Activated CD4-positive, alpha-beta T cell treated with anti-CD3 and anti-CD28 coated beads, Interleukin-2, amount 10 ng/mL, durations not matched to agents 24 days and 14 days (primary cell): ENCODE measurements at regions of chr11 and their contacts with region 1.

Region 1: GRCh38 chr11:6419009-6419631 is at the start of gene APBB1:
- DNase-seq: peak; percentile 93
- H3K4me3 Mint-ChIP-seq: no peak within 1 kb of the TSS
- H3K27ac Mint-ChIP-seq: peak within 1 kb of the TSS; percentile 45
- H3K4me1 Mint-ChIP-seq: peaks cover 3% of the 10 kb centered on the region
- H3K27me3 Mint-ChIP-seq: peaks cover 33% of the 10 kb centered on the region
- total RNA-seq, gene APBB1: 24.1 TPM in 2 replicates

Region 2: GRCh38 chr11:6298605-6299004 is 120.5 kb before region 1 on chr11:
- intact Hi-C with region 1: no loop called
- DNase-seq: no peak
- H3K4me3 Mint-ChIP-seq: no peak overlapping the region
- H3K27ac Mint-ChIP-seq: no peak overlapping the region
- H3K4me1 Mint-ChIP-seq: no peaks in the 10 kb centered on the region
- H3K27me3 Mint-ChIP-seq: peaks cover 11% of the 10 kb centered on the region

Region 3: DNA sequence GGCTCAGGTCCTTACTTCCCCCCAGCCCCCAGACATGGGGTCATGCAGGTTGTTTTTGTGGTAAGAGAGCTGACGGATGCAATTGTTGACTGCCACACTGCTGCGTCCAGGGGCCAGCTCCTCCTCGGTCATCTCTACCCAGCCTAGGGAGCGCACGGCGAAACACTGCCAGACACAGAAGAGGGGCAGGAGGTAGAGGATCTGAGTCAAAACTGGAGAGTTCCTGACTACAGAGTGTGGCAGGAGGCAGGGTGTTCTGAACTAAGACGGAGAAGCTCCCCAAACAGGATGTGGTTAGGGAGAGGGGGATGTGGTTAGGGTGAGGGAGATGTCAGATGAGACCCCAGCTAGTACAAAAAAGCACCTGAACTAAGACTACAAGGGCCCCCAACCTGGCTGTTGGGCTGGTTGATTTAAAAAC is 16.5 kb before region 1 on chr11:
- intact Hi-C with region 1: loop called (anchors 1 kb)
- DNase-seq: peak; percentile 95
- H3K4me3 Mint-ChIP-seq: peak overlapping the region; percentile 85
- H3K27ac Mint-ChIP-seq: peak overlapping the region; percentile 96
- H3K4me1 Mint-ChIP-seq: peaks cover 57% of the 10 kb centered on the region
- H3K27me3 Mint-ChIP-seq: no peaks in the 10 kb centered on the region

Region 4: DNA sequence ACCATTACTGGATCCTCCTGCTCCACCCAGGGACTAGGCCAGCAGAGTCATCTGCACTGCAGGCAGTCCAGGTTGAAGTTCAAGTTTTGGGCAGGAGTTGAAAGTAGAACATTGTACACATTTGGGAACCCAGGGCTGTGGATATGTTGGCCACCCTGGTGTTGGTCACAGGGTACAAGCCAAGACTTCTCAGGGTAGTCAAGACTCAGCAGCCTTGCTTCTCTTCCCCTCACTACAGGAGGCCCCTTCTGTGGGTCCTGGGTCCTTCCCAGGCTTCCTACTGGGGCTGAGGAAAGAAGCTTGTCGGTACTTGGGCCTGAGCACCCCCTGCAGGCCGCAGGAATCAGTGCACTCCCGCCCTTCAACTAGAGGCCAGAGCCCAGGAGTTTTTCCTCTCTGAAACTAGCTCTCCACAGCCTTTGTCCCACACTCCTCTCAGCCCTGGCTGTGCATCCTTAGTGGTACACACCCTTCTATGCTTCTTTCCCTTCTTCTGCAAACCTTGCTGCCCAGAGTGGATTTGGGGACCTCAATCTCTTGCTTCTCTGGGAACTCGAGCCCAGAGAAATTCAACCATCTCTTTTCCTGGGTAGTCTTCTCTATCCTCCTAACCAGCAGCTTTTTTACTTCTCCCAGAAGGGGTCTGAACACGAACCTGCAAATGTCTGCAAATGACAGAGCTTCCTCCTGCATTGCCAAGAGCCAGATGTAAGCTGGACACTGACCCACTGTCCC is 24.3 kb after region 1 on chr11:
- intact Hi-C with region 1: loop called (anchors 2 kb)
- DNase-seq: peak; percentile 87
- H3K4me3 Mint-ChIP-seq: no peak overlapping the region
- H3K27ac Mint-ChIP-seq: no peak overlapping the region
- H3K4me1 Mint-ChIP-seq: no peaks in the 10 kb centered on the region
- H3K27me3 Mint-ChIP-seq: peaks cover 11% of the 10 kb centered on the region

Region 5: DNA sequence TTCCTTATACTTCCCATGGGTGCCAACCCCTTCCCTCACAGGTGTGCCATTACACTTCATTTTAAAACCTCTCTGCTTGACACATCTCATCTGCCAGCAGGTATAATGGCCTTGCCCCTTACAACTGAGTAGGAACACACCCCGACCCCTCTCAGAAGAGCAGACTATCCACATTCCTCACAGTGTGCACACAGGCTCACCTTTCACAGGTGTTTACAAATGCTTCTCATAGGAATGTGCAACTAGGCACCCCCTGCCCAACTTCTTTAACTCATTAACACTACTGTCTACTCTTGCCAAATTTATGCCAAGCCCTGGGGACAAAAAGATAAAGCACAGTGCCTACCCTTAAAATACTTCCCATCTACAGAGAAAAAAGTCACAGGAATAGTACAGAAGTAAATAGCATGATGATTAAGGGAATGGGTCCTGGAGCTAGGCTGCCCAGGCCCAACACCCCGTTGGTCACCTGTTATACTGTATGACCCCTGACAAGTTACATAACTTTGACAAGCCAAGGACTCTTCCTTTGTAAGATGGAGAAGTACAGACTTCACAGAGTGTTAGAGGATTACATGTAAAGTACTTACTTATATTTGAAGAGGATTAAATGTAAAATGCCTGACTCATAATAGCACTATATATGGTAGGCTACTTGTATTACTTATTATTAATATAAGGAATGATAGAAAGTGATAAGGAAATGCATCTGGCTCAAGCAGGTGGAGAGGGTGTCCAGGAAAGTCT is 39.4 kb after region 1 on chr11:
- intact Hi-C with region 1: no loop called
- DNase-seq: no peak
- H3K4me3 Mint-ChIP-seq: no peak overlapping the region
- H3K27ac Mint-ChIP-seq: no peak overlapping the region
- H3K4me1 Mint-ChIP-seq: no peaks in the 10 kb centered on the region
- H3K27me3 Mint-ChIP-seq: no peaks in the 10 kb centered on the region

Region 6: DNA sequence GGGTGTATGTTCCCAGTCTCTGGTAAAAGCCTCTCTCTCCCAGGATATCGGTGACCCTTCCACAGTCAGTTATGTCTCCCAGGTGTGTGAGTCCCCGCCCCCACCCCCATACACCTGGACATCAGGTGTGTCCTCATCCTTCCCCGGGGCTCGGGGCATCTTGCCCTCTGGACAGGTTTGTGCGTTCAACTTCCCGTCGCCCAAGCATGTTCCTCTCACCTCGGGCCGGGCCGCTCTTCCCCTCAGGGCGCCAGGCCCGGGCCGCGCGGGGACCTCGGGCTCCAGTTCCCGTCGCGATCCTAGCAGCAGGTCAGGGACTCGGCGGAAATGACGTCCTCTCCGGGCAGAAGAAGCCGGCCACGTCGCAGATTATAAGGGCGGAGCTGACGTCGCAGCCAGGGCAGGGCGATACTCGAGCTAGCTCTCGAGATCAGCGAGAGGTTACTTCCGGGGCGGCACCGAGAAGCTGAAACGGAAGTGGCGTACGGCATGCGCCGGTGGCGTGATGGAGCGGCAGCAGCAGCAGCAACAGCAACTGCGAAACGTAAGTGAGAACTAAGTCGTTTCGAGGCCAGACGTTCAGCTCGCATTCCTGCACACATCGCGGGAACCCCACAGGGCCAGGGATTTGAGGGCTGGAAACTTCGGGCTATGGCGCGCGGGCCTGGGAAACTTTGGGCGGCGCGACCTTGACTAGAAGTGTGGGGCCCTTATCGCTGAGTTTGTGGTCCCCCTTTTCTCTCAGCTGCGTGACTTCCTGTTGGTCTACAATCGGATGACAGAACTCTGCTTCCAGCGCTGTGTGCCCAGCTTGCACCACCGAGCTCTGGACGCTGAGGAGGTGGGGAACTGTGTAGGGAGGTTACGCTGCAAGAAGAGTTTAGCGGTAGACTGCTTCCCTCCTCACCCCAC is 62.1 kb after region 1 on chr11 and contains the starts of genes ARFIP2 and TIMM10B:
- intact Hi-C with region 1: loop called (anchors 5 kb)
- DNase-seq: peak; percentile 99
- H3K4me3 Mint-ChIP-seq: peak within 1 kb of the TSS; percentile 94
- H3K27ac Mint-ChIP-seq: peak within 1 kb of the TSS; percentile 98
- H3K4me1 Mint-ChIP-seq: peaks cover 30% of the 10 kb centered on the region
- H3K27me3 Mint-ChIP-seq: no peaks in the 10 kb centered on the region
- total RNA-seq, gene ARFIP2: 50.8 and 51.2 TPM in 2 replicates
- total RNA-seq, gene TIMM10B: 41.3 and 47.4 TPM in 2 replicates

Region 7: GRCh38 chr11:6924122-6924521 is 505.0 kb after region 1 on chr11:
- intact Hi-C with region 1: no loop called
- DNase-seq: no peak
- H3K4me3 Mint-ChIP-seq: no peak overlapping the region
- H3K27ac Mint-ChIP-seq: no peak overlapping the region
- H3K4me1 Mint-ChIP-seq: peaks cover 18% of the 10 kb centered on the region
- H3K27me3 Mint-ChIP-seq: peaks cover 39% of the 10 kb centered on the region